Activated T-helper 1 cell treated with anti-CD3 and anti-CD28 coated beads, Interleukin-12 subunit alpha, Interleukin-12 subunit beta, Interleukin-2, Interleukin-4 antibody, amounts not matched to agents 30 ng/mL and 10 ng/mL and 1 ng/mL, durations not matched to agents 14 hours and 24 hours and 36 hours (primary cell): ENCODE measurements at regions of chr6 and their contacts with region 1.

Region 1: GRCh38 chr6:63764318-63764916 is 128.8 kb downstream of the PHF3 start:
- DNase-seq: no peak
- H3K4me3 Mint-ChIP-seq: no peak overlapping the region
- H3K27ac Mint-ChIP-seq: no peak overlapping the region
- H3K4me1 Mint-ChIP-seq: no peaks in the 10 kb centered on the region
- H3K27me3 Mint-ChIP-seq: peaks cover 14% of the 10 kb centered on the region

Region 2: DNA sequence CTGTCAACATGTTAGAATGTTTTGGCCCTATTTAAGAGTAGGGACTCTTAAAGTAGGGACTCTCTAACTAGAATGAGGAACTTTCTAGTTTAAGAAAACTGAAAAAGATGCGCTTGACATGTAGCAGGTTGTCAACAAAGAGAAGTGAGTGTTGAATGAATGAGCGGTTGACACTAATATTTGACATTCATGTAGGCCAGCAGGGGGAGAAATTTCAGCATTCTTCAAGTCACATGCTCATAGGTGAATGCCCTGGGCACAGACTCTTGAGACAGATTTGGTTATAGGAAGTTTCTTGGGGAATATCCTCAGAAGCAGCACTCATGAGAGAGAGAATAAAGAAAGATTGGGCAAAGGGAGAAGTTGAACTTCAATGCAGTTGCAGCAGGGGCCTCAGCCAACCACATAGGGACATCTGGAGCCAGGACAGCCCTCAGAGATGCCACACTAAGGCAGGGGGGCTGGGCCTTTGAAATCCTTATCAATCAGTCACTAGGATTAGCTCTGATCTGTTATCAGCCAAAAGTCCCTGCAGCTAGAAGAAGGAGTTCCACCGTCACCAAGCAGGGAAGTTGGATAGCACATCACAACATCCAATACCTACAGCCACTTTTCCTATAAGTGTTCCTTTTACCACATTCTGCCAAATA is 698.2 kb before region 1 on chr6:
- intact Hi-C with region 1: loop called (anchors 5 kb)
- DNase-seq: no peak
- H3K4me3 Mint-ChIP-seq: no peak overlapping the region
- H3K27ac Mint-ChIP-seq: no peak overlapping the region
- H3K4me1 Mint-ChIP-seq: no peaks in the 10 kb centered on the region
- H3K27me3 Mint-ChIP-seq: no peaks in the 10 kb centered on the region

Region 3: DNA sequence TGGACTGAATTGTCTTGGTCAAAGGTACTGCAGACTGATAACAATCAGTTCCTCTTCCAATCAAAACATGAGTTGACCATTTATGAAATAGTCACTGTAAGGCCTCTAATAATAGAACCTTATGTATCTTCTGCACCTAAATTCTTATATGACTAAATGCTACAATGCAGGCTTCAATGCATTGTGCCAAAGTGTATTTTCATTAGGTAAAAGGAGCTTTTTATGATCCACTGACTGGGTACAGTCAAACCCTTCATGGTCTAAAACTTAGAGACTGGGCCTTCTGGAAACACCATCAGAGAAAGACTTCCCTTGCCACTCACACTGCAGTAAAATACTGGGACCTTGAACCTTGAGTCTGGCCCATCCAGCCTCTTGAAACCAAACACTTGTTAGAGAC is 460.9 kb before region 1 on chr6:
- intact Hi-C with region 1: loop called (anchors 5 kb)
- DNase-seq: no peak
- H3K4me3 Mint-ChIP-seq: no peak overlapping the region
- H3K27ac Mint-ChIP-seq: no peak overlapping the region
- H3K4me1 Mint-ChIP-seq: no peaks in the 10 kb centered on the region
- H3K27me3 Mint-ChIP-seq: no peaks in the 10 kb centered on the region

Region 4: GRCh38 chr6:63352587-63353285 is 411.7 kb before region 1 on chr6:
- intact Hi-C with region 1: loop called (anchors 1 kb)
- DNase-seq: no peak
- H3K4me3 Mint-ChIP-seq: peak overlapping the region; percentile 41
- H3K27ac Mint-ChIP-seq: no peak overlapping the region
- H3K4me1 Mint-ChIP-seq: peaks cover 15% of the 10 kb centered on the region
- H3K27me3 Mint-ChIP-seq: peaks cover 6% of the 10 kb centered on the region

Region 5: DNA sequence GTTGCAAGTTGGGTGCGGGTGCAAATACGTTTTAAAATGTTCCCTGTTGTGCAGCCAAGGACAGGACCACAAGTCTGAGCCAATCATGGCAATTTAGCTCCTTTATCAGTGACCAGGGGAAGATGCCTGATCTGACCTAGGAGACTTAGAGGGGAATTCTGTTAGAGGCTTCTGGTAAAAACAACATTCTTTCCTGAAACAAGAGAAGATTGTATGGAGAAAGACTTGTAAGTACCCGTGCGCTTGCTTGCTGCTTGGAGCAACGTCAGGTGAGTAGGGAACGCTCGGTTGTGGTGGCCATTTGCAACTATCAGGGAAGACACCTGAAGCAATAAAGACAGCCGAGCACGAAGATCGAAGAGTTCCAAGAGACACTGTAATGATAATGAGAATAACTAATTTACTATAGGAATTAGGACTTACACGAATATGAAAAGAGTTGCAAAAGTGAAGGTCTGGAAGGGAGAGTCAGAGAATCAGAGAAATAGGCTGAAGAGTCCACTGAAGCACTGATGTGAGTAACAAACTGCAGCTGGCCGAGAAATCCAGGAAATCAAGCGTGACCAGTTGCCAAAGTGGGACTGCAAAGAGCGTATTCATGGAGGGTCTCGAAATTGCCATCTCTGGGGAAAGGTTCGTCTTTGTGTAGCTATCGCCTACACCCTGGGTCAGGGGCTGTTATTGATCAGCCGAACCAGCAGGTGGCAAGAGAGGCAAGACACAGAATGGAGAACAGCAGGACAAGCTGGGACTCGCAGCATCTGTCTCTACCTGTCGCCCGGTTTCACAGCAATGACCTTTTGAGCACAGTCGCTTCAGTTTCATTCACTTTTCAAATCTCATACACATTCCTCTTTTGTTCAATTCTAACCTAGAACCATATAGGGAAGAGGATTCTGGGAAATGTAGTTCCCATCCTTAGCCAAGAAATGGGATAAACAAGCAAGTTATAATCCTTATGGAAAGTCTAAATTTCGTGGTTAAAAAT is 166.1 kb before region 1 on chr6:
- intact Hi-C with region 1: loop called (anchors 1 kb)
- DNase-seq: peak; percentile 63
- H3K4me3 Mint-ChIP-seq: peak overlapping the region; percentile 86
- H3K27ac Mint-ChIP-seq: no peak overlapping the region
- H3K4me1 Mint-ChIP-seq: peaks cover 16% of the 10 kb centered on the region
- H3K27me3 Mint-ChIP-seq: peaks cover 10% of the 10 kb centered on the region